ENCODE measurements at regions of chr14 and their contacts with region 1.

Region 1: GRCh38 chr14:23320774-23321571 is at the start of gene PABPN1:
- DNase-seq: peak; percentile 93
- ATAC-seq: peak; percentile 92
- H3K4me3 Mint-ChIP-seq: peak within 1 kb of the TSS; percentile 94
- H3K27ac Mint-ChIP-seq: peak within 1 kb of the TSS; percentile 98
- H3K4me1 Mint-ChIP-seq: peaks cover 27% of the 10 kb centered on the region
- H3K27me3 Mint-ChIP-seq: no peaks in the 10 kb centered on the region
- total RNA-seq, gene PABPN1: 207 to 208 TPM

Region 2: GRCh38 chr14:23095196-23096108 is 225.5 kb before region 1 on chr14 and contains the start of gene C14orf119:
- POLR2A ChIA-PET with region 1: interaction called, 25 read pairs
- DNase-seq: peak; percentile 86
- ATAC-seq: peak; percentile 93
- H3K4me3 Mint-ChIP-seq: no peak within 1 kb of the TSS
- H3K27ac Mint-ChIP-seq: no peak within 1 kb of the TSS
- H3K4me1 Mint-ChIP-seq: peaks cover 32% of the 10 kb centered on the region
- H3K27me3 Mint-ChIP-seq: no peaks in the 10 kb centered on the region
- total RNA-seq, gene C14orf119: 46.6 to 47.4 TPM

Region 3: GRCh38 chr14:23120541-23121251 is 200.3 kb before region 1 on chr14:
- POLR2A ChIA-PET with region 1: interaction called, 19 read pairs
- DNase-seq: peak; percentile 82
- ATAC-seq: peak; percentile 53
- H3K4me3 Mint-ChIP-seq: peak overlapping the region; percentile 65
- H3K27ac Mint-ChIP-seq: peak overlapping the region; percentile 96
- H3K4me1 Mint-ChIP-seq: peaks cover 28% of the 10 kb centered on the region
- H3K27me3 Mint-ChIP-seq: no peaks in the 10 kb centered on the region

Region 4: GRCh38 chr14:23286020-23286905 is 34.7 kb before region 1 on chr14 and contains the start of gene HOMEZ:
- POLR2A ChIA-PET with region 1: interaction called, 26 read pairs
- DNase-seq: peak; percentile 96
- ATAC-seq: peak; percentile 99
- H3K4me3 Mint-ChIP-seq: peak within 1 kb of the TSS; percentile 93
- H3K27ac Mint-ChIP-seq: peak within 1 kb of the TSS; percentile 89
- H3K4me1 Mint-ChIP-seq: peaks cover 16% of the 10 kb centered on the region
- H3K27me3 Mint-ChIP-seq: no peaks in the 10 kb centered on the region
- total RNA-seq, gene HOMEZ: 11.8 to 12.8 TPM

Region 5: DNA sequence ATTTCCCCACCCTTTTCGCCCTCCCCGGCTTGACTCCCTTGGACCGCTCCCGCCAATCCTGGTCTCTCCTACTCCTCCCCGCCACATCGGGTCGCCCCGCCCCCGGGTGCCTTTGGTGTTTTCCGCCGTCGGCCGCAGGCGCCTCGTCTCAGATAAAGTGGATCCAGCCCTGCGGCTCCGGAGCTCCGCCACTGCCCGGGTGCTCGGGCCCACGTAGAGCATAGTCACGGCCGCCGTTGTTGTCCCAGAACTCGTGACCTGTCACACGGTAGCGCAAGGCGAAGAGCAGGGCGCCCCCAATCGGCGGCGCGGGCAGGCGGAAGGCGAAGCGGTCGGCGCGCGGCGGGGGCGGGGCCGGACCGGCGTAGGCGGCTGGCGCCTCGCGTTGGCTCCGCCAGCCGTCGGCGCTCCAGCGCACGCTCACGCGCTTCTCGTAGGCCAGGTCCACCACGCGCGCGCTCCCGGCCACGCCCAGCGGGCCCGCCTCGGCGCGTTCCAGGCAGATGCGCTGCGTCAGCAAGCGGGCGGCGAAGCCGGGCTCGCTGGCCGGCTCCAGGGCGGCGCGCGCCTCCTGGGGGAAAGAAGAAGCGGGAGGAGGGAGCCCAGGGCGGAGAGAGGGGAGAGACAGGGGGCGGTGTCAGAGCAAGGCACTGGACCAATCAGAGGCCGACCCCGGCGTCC is 19.5 kb before region 1 on chr14:
- POLR2A ChIA-PET with region 1: interaction called, 182 read pairs
- DNase-seq: peak; percentile 100
- ATAC-seq: peak; percentile 83
- H3K4me3 Mint-ChIP-seq: peak overlapping the region; percentile 96
- H3K27ac Mint-ChIP-seq: peak overlapping the region; percentile 97
- H3K4me1 Mint-ChIP-seq: peaks cover 17% of the 10 kb centered on the region
- H3K27me3 Mint-ChIP-seq: peaks cover 7% of the 10 kb centered on the region

Region 6: DNA sequence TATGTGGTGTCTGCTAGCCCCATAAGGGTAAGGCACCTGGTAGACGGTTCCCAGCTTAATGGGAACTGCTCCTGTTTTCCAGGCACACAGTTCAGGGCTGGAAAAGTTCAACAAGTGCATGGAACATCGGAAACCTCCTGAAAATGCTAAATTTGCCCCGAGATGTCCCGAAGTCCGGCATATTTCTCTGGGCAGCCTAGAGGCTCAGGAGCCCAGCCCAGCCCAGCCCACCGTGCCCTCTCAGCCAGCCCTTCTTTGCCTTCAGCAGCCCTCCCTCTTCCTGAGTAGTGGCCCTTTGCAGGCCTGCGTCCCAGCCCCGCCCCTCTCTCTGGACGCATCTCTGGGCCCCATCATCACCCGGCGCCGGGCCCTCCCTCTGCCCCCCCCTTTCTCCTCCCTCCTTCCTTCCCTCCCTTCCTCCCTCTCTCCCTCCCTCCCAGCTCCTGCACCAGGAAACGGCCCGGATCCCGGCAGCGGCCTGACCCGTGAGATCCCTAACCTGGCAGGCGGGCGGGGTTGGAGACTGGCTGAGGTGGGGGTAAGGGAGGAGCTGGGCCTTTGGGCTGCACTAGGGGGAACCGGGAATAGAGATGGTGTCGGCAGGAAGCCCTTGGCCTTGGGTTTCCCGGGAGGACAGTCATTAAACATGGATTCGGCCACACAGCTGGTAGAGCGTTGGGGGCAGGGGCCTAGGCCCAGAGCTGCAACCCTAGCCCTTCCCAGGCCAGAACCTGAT is 14.4 kb before region 1 on chr14 and contains the start of gene BCL2L2:
- POLR2A ChIA-PET with region 1: interaction called, 182 read pairs
- DNase-seq: peak; percentile 49
- ATAC-seq: no peak
- H3K4me3 Mint-ChIP-seq: peak within 1 kb of the TSS; percentile 80
- H3K27ac Mint-ChIP-seq: peak within 1 kb of the TSS; percentile 76
- H3K4me1 Mint-ChIP-seq: peaks cover 13% of the 10 kb centered on the region
- H3K27me3 Mint-ChIP-seq: peaks cover 14% of the 10 kb centered on the region
- total RNA-seq, gene BCL2L2: 3.7 to 5.7 TPM

Region 7: GRCh38 chr14:23335623-23336022 is 14.7 kb after region 1 on chr14:
- POLR2A ChIA-PET with region 1: no interaction called
- DNase-seq: no peak
- ATAC-seq: no peak
- H3K4me3 Mint-ChIP-seq: no peak overlapping the region
- H3K27ac Mint-ChIP-seq: no peak overlapping the region
- H3K4me1 Mint-ChIP-seq: no peaks in the 10 kb centered on the region
- H3K27me3 Mint-ChIP-seq: peaks cover 14% of the 10 kb centered on the region

Measured in activated naive CD8-positive, alpha-beta T cell treated with anti-CD3 and anti-CD28 coated beads, Interleukin-2, amount 10 ng/mL, durations not matched to agents 7 days and 5 days (primary cell).